ENCODE measurements at regions of chr14 and their contacts with region 1.

Region 1: GRCh38 chr14:49892636-49893308 is at the start of gene ARF6:
- DNase-seq: peak; percentile 98 to 99
- H3K4me3 ChIP-seq: peak within 1 kb of the TSS; percentile 84 to 93
- H3K27ac ChIP-seq: peak within 1 kb of the TSS; percentile 95 to 99
- H3K4me1 ChIP-seq: peaks cover 0 to 46% (median 24%) of the 10 kb centered on the region in 4 donors
- H3K27me3 ChIP-seq: no peaks in the 10 kb centered on the region
- CTCF ChIP-seq: peak; percentile 16 to 25

Region 2: GRCh38 chr14:49692811-49693734 is 199.7 kb before region 1 on chr14 and contains the start of gene KLHDC1:
- intact Hi-C with region 1: no loop called
- DNase-seq: peak; percentile 88 to 94
- H3K4me3 ChIP-seq: peak within 1 kb of the TSS; percentile 68 to 89
- H3K27ac ChIP-seq: peak within 1 kb of the TSS; percentile 87 to 98
- H3K4me1 ChIP-seq: peaks cover 0 to 23% (median 10%) of the 10 kb centered on the region in 4 donors
- H3K27me3 ChIP-seq: no peaks in the 10 kb centered on the region
- CTCF ChIP-seq: no peak

Region 3: GRCh38 chr14:49754570-49755097 is 138.1 kb before region 1 on chr14:
- intact Hi-C with region 1: no loop called
- DNase-seq: no peak
- H3K4me3 ChIP-seq: no peak overlapping the region
- H3K27ac ChIP-seq: no peak overlapping the region
- H3K4me1 ChIP-seq: no peaks in the 10 kb centered on the region
- H3K27me3 ChIP-seq: no peaks in the 10 kb centered on the region
- CTCF ChIP-seq: no peak

Region 4: GRCh38 chr14:49982501-49982951 is 89.8 kb after region 1 on chr14:
- intact Hi-C with region 1: loop called (anchors 5 kb)
- DNase-seq: no peak
- H3K4me3 ChIP-seq: peak overlapping the region; percentile 35 to 46
- H3K27ac ChIP-seq: peak overlapping the region; percentile 58 to 68
- H3K4me1 ChIP-seq: peaks cover 0 to 19% (median 6%) of the 10 kb centered on the region in 4 donors
- H3K27me3 ChIP-seq: no peaks in the 10 kb centered on the region
- CTCF ChIP-seq: no peak

Measured in tibial artery (tissue), 4 donors.